Activated CD8-positive, alpha-beta T cell treated with anti-CD3 and anti-CD28 coated beads, Interleukin-2, amount 10 ng/mL, durations not matched to agents 7 days and 5 days (primary cell): ENCODE measurements at regions of chr10 and their contacts with region 1.

Region 1: GRCh38 chr10:101042667-101043355 is 11.8 kb downstream of the SFXN3 start:
- DNase-seq: peak; percentile 93
- ATAC-seq: peak; percentile 92
- H3K4me3 Mint-ChIP-seq: peak overlapping the region; percentile 91
- H3K27ac Mint-ChIP-seq: peak overlapping the region; percentile 93
- H3K4me1 Mint-ChIP-seq: peaks cover 31% of the 10 kb centered on the region
- H3K27me3 Mint-ChIP-seq: peaks cover 34% of the 10 kb centered on the region

Region 2: DNA sequence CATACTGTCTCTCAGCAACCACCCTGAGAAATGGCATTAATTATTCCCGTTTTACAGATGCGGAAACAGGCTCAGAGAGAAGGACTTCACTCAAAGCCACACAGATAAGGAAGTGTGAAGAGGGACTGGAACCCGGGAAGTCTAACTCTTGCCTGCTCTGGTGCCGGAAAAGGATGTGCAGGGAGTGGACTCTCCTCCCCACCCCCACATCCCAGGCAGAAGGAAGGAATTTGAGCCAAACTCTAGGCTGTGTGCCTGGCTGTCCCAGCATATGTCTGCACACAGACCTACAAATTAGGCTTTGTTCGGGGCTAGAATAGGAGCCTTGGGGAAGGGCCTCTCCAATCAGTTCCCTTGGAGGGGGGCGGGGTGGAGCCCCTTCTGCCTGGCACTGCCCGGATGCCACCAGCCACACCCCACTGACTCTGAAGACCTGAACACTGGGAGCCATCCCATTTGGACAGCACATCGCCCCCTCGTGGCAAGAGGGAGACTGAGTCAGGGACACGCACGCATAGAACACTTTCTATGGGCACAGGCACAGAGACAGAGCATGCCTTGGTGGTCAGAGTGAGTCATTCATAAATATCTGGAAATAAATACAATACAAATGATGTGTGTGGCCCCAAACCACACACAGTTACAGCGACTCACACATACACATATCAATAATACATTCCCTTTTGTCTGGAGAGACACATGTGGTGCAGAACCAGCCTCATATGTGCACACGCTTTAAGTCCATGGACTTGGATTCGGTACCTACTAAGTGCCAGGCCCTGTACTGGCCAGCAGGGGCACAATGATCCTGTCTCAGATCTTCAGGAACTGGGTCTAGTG is 30.1 kb before region 1 on chr10:
- CTCF ChIA-PET with region 1: interaction called, 169 read pairs
- POLR2A ChIA-PET with region 1: no interaction called
- DNase-seq: peak; percentile 88
- ATAC-seq: peak; percentile 94
- H3K4me3 Mint-ChIP-seq: no peak overlapping the region
- H3K27ac Mint-ChIP-seq: no peak overlapping the region
- H3K4me1 Mint-ChIP-seq: peaks cover 16% of the 10 kb centered on the region
- H3K27me3 Mint-ChIP-seq: peaks cover 31% of the 10 kb centered on the region

Region 3: DNA sequence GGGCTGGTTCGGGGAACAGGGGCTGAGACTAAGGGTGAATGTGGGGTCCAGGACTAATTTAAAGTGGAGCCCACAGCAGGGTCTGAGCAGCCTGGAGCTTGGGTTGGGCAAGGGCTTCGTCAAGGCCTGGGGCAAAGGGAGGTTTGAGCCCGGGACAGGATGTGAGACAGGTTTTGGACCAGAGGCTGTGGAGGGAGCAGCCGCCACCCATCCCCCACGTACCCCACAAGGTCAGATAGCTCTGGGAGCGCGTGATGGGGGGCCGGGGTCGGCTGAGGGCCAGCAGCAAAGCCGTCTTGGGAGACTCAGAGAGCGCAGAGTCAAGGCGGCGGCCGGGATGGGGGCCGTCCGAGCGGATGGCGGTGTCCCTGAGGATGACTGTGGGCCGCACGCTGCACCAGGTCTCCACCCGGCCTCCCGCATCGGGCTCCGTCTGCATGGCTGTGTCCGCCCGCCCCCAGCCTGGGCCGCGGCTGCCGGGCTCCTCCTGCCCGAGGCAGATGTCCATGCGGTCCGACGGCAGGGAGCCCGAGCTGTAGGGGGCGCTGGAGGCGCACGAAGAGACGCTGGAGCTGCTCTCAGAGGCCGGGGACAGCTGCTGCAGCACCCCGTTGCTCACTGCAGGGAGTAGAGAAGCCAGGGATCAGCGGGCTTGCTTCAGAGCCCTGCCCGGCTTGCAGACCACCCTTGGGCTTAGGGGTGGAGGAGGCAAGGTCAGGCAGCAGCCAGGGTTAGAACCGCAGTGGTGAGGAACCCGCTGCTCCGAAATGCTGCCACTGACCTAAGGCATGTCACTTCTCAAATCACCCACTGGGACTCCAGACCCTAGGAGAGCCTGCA is 24.0 kb before region 1 on chr10:
- CTCF ChIA-PET with region 1: interaction called, 169 read pairs
- POLR2A ChIA-PET with region 1: no interaction called
- DNase-seq: peak; percentile 83
- ATAC-seq: peak; percentile 90
- H3K4me3 Mint-ChIP-seq: no peak overlapping the region
- H3K27ac Mint-ChIP-seq: no peak overlapping the region
- H3K4me1 Mint-ChIP-seq: peaks cover 10% of the 10 kb centered on the region
- H3K27me3 Mint-ChIP-seq: peaks cover 43% of the 10 kb centered on the region

Region 4: GRCh38 chr10:101031128-101031795 is 11.5 kb before region 1 on chr10 and contains the starts of genes PDZD7 and SFXN3:
- CTCF ChIA-PET with region 1: interaction called, 19 read pairs
- POLR2A ChIA-PET with region 1: interaction called, 5 read pairs
- DNase-seq: peak; percentile 97
- ATAC-seq: peak; percentile 90
- H3K4me3 Mint-ChIP-seq: peak within 1 kb of the TSS; percentile 79
- H3K27ac Mint-ChIP-seq: peak within 1 kb of the TSS; percentile 90
- H3K4me1 Mint-ChIP-seq: peaks cover 20% of the 10 kb centered on the region
- H3K27me3 Mint-ChIP-seq: peaks cover 17% of the 10 kb centered on the region
- total RNA-seq, gene PDZD7: 0.47 to 0.50 TPM
- total RNA-seq, gene SFXN3: 24.7 to 24.8 TPM

Region 5: GRCh38 chr10:101060036-101060950 is 17.5 kb after region 1 on chr10:
- CTCF ChIA-PET with region 1: interaction called, 235 read pairs
- POLR2A ChIA-PET with region 1: interaction called, 12 read pairs
- DNase-seq: peak; percentile 93
- ATAC-seq: peak; percentile 75
- H3K4me3 Mint-ChIP-seq: peak overlapping the region; percentile 88
- H3K27ac Mint-ChIP-seq: peak overlapping the region; percentile 96
- H3K4me1 Mint-ChIP-seq: peaks cover 47% of the 10 kb centered on the region
- H3K27me3 Mint-ChIP-seq: peaks cover 23% of the 10 kb centered on the region

Region 6: DNA sequence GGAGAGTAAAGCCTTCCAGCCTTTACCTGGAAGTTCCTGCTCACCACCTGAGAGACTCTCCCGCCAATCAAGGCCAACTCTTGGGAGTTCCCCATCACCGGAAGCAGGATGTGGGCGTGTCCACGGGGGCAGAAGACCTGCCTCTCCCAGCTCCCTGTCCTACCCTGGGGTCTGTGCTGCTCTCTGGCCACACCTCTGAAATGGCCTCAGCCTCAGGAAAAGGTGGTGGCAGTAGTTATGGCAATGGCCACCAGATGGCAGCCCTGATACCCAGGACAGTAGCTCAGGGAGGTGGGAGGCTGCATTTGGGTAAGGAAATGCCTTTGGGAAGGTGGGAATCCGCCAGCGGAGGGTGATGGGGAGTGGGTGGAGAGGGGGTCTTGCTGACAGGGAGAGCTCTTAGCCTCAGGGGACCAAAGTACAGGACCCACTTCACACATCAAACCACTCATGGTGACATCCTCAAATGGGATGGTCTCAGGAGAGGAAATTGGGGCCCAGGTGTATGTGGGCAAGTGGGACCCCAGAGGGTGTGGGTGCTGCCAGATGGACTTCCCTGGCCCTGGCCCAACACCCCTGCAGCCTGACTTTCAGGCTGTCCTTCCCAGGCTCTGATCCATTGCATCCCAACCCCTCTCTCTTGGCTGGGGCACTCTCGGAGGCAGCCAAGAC is 52.9 kb after region 1 on chr10:
- CTCF ChIA-PET with region 1: interaction called, 12 read pairs
- POLR2A ChIA-PET with region 1: no interaction called
- DNase-seq: peak; percentile 79
- ATAC-seq: peak; percentile 90
- H3K4me3 Mint-ChIP-seq: no peak overlapping the region
- H3K27ac Mint-ChIP-seq: no peak overlapping the region
- H3K4me1 Mint-ChIP-seq: no peaks in the 10 kb centered on the region
- H3K27me3 Mint-ChIP-seq: peaks cover 34% of the 10 kb centered on the region